ENCODE measurements at regions of chr6 and their contacts with region 1.

Region 1: GRCh38 chr6:111210194-111210728 is 123.0 kb downstream of the SLC16A10 start:
- DNase-seq: peak in 1 of 2 donors; percentile 22
- ATAC-seq: peak; percentile 27 to 70 (median 57)
- H3K4me3 ChIP-seq: no peak overlapping the region
- H3K27ac ChIP-seq: no peak overlapping the region
- H3K4me1 ChIP-seq: peaks cover 0 to 13% (median 0%) of the 10 kb centered on the region in 9 donors
- H3K27me3 ChIP-seq: no peaks in the 10 kb centered on the region
- CTCF ChIP-seq: peak; percentile 40 to 77 (median 73)

Region 2: DNA sequence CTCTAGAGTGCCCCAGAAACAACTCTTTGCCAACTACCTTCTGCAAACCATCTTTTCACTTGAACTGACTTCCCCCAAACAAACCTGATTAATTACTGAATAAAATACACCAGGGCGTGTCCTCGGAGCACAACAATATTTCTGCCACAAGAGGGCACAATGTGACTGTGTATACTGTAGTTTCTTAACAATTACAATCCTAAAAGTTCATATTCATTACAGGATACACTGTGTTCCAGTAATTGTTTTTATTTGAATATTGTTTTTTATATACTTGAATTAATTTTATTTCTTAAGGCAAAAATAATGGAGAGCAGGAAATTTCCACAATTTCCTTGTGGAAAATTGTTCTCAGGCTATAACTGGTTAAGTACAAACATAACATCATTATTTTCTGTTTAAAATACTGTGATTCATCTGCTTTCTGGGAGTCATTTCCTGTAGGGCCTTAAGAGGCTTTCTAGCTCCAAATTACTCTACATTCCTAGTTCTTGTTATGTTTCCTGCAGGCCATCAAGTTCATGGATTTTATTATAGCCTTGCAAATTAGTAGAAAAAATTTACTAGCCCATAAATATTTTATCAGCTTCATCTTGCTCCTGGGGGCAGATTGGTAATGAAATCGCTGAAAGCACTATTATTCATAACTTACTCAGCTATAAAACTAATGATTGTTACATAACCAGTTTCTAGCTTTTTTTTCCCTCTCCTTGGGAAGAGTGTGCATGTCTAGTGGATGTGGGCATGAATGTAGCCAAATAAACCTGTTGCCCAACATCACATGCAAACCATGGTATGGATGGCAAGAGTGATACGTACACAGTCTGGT is 681.9 kb before region 1 on chr6:
- intact Hi-C with region 1: loop called in 1 of 10 experiments (anchors 10 kb)
- DNase-seq: peak in 1 of 2 donors; percentile 51
- ATAC-seq: peak; percentile 48 to 89 (median 84)
- H3K4me3 ChIP-seq: no peak overlapping the region
- H3K27ac ChIP-seq: peak overlapping the region in 7 of 10 donors; percentile 8 to 52 (median 38)
- H3K4me1 ChIP-seq: peaks cover 0 to 19% (median 6%) of the 10 kb centered on the region in 9 donors
- H3K27me3 ChIP-seq: no peaks in the 10 kb centered on the region
- CTCF ChIP-seq: peak; percentile 72 to 88 (median 81)

Region 3: GRCh38 chr6:111011360-111012142 is 198.7 kb before region 1 on chr6:
- intact Hi-C with region 1: loop called in 8 of 10 experiments (anchors 5 kb)
- DNase-seq: no peak
- ATAC-seq: peak; percentile 42 to 73 (median 60)
- H3K4me3 ChIP-seq: no peak overlapping the region
- H3K27ac ChIP-seq: no peak overlapping the region
- H3K4me1 ChIP-seq: peaks cover 0 to 9% (median 0%) of the 10 kb centered on the region in 9 donors
- H3K27me3 ChIP-seq: no peaks in the 10 kb centered on the region
- CTCF ChIP-seq: peak in 8 of 9 donors; percentile 36 to 73 (median 61)

Region 4: DNA sequence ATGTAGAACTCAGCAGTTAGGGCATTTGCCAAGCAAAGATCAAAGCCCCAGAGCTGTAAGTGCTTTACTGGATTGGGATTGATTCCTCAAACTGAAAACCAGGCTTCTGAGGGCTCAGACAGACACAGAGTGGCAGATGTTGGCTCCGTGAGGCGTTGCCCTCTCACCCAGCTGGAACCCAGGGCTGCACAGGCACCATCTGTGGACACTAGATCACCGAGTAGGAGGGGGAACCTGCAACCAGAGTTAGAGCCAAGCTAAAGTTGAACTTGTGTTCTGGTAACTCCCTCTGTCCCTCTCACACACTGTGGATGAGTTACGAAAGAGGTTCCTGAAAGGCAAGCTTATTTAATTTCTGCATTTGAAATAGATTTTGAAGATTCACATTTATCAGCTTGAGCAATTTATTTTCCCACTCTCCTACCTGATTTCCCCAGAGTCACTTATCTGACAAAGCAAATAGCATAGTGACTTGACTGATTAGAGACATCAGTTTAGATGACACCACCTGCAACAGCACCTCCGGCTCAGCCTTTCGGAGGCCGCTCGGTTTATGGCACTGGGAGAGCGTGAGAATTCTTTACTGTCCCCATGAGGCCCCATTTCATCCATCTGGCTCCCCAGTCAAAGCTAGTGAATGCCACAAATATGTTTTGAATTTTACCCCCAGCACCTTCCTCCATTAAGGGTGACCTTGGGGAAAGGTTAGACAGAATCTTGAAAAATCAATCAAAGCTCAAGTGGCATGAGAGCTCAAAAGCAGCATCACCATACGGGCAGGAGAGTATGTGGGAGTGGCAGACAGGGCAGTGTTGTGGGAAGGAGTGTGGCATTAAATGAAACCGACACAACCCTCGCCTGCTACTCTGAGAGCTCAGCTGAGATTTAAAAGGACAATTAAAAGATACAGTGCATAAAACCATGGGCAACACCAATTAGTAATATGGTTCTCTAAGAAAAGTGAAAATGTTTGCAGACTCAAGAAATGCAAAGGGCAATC is 180.0 kb before region 1 on chr6:
- intact Hi-C with region 1: loop called in 2 of 10 experiments (anchors 5 kb)
- DNase-seq: peak; percentile 36 to 49
- ATAC-seq: peak; percentile 76 to 94 (median 90)
- H3K4me3 ChIP-seq: no peak overlapping the region
- H3K27ac ChIP-seq: peak overlapping the region in 7 of 10 donors; percentile 34 to 69 (median 58)
- H3K4me1 ChIP-seq: peaks cover 0 to 27% (median 0%) of the 10 kb centered on the region in 9 donors
- H3K27me3 ChIP-seq: no peaks in the 10 kb centered on the region
- CTCF ChIP-seq: no peak

Region 5: DNA sequence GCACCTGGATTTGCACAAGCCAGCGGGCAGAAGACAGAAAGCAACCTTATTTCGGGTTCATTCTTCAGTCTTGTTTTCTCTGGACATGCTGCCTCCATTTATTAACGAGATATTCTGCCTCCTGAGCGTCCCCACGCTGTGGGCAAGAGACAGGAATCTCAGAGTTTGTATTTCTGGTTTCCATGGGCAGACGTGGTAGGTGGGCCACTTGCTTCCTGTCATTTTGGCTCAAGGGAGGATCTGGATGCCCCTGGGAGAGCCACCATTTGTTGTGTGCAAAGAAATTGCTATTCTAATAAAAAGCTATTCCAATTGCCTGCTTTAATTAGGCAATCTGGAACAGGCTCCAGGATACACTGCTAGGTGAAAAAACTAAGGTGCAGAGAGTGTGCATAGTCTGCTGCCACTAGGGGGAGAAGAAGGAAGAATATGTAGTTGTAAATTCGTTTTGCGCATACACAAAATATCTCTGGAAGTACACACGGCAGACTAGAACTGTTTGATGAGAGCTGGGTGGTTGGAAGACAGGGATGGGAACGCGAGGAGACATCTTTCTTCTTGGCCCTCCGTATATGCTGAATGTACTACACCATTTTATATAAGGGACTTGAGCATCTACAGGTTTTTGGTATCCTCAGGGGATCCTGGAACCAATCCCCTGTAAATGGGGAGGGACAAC is 153.0 kb before region 1 on chr6:
- intact Hi-C with region 1: loop called in 8 of 10 experiments (anchors 1 to 5 kb)
- DNase-seq: peak in 1 of 2 donors; percentile 18
- ATAC-seq: peak in 7 of 8 donors; percentile 11 to 78 (median 59)
- H3K4me3 ChIP-seq: no peak overlapping the region
- H3K27ac ChIP-seq: no peak overlapping the region
- H3K4me1 ChIP-seq: peaks cover 0 to 2% (median 0%) of the 10 kb centered on the region in 9 donors
- H3K27me3 ChIP-seq: no peaks in the 10 kb centered on the region
- CTCF ChIP-seq: peak; percentile 42 to 72 (median 64)

Region 6: DNA sequence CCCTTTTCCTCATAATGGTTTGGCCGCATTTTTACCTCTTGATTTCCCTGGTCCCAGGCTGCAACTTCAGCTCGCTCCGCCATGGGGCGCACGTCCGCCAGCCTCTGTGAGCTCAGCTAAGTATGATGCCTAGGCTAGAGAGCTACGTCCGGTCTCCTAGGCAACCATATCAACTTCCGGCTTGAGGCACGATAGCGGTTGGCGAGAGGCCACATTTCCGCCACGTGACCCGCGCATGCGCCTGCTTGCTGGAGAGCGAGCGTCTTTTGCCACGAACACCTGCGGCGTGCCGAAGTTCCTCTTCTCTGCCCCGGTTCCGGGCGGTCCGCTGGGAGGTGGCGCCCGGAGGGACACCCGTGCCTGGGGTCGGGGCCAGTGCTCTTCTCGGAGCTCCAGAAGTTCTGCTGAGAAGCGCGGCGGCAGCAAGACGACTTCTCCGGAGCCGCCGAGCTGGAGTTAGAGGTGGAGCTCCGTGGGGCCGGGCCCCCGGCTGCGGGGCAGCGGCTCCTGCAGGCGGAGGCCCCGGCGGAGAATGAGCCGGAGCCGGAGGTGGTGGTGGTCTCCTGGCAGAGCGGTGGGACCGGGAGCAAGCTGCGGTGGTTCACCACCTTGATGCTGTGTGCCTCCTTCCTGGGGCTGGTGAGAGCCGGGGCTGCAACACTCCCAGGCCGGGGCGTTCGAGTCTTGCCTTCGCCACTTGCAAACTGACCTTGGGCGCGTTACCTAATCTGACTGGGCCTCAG is 49.0 kb after region 1 on chr6:
- intact Hi-C with region 1: loop called in 1 of 10 experiments (anchors 2 kb)
- DNase-seq: peak; percentile 99
- ATAC-seq: peak; percentile 98 to 99 (median 99)
- H3K4me3 ChIP-seq: peak overlapping the region; percentile 57 to 96 (median 70)
- H3K27ac ChIP-seq: peak overlapping the region in 9 of 10 donors; percentile 71 to 92 (median 88)
- H3K4me1 ChIP-seq: peaks cover 0 to 27% (median 17%) of the 10 kb centered on the region in 9 donors
- H3K27me3 ChIP-seq: peaks cover 0 to 14% (median 2%) of the 10 kb centered on the region in 7 donors
- CTCF ChIP-seq: peak; percentile 90 to 98 (median 95)

Measured in heart right ventricle (tissue), 16 donors.